GM18951 (cell line): ENCODE measurements at regions of chr2 and their contacts with region 1.

Region 1: GRCh38 chr2:173402405-173402974 is 47.8 kb downstream of the CDCA7 start:
- POLR2A ChIP-seq: no peak

Region 2: DNA sequence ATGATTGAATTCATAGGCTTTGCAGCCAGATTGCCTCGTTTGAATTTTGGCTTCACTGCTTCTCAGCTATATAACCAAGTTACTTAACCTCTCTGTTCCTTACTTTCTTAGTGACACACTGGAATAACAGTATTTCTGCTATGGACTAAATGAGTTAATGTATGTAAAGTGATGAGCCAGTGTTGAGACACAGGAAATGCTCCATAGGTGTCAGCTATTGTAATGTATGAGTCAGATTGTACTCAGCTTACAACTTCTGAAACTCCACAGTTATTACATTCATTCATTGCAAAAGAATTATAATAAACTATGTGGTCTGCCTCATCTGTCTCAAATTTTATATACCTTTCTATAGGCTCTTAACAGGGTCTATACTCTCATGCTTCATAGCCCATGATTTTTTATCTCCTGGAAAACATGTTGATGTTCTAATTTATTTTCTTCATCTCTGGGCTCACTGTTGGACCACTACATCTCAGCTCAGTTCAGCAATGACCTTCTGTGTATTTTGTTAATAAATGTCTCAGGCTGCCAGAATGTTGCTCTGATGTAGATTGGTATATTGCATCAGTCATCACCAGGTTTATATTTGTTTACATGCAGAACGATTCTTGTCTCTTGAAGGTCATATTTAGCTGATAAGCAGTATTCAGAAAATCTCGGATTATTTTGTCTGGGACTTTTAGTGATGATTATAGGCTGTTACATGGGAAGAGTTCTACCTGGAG is 250.7 kb before region 1 on chr2:
- in situ Hi-C with region 1: no loop called
- POLR2A ChIP-seq: no peak

Region 3: DNA sequence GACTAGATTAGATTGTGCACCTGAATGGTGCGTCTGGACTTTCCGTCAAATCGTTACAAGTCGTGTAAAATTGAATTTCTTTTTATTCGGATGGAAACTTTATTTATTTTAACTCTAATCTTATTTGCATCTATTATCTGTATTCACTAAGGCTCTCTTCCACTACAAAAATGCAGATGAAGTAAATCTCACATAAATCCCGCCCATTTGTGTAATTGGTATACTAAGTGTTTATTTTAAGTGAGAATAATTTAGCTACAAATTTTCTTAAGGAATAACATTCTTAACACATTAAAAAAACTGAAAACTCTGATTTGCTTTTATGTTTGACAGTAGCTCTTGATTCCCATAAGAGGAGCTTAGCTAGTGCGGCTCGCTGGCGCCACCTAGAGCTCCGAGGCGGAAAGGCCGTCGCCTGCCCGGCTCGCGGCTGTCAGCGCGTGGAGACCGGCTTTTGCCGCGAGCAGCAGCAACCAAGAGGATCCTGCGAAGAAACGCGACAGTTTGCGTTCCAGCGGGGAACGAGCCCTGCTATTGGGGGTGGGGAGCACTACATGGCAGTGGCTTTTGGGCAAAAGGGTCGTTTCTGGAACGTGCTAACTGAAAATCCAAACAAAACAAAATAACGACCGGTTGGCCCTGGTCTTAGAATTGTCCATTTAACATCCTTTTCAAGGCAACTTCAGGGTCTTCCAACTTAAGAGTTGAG is 939.0 kb after region 1 on chr2:
- in situ Hi-C with region 1: loop called (anchors 25 kb)
- POLR2A ChIP-seq: no peak